ENCODE measurements at regions of chr12 and their contacts with region 1.

Region 1: DNA sequence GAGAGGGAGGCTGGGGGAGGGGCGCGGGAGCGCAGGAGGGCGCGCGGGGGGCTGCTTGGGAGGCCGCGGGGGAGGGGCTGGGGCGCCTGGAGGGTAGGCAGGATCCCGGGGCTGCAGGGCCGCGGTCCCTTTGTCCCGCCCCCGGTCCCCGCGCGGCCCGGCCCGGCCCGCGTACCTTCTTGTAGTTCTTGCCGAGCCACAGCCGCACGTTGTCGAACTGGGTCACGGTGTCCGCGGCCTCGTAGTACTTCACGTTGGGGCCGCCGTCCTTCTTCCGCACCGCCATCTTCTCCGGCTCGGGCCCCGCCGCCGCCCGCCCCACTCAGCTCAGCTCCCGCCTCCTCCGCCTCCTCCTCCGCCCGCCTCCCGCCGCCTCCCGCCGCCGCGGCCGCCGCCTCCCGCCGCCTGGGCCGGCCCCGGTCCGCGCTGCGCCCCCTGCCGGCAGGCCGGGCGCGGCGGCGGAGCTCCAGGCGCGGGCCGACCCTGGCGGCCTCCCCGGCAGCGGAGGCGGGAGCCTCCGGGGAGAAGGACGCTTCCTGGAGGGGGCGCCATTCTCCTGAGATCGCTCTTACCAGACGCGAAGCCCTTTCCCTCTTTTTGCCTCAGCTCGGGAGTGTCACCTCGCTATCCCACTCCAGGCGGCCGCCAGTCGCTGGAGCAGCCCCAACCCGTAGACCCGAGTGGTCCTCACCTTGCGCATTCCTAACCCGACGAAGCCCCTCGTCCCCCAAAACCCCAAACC is at the start of gene SMARCC2:
- DNase-seq: no peak
- H3K4me3 ChIP-seq: peak within 1 kb of the TSS; percentile 71
- H3K27me3 ChIP-seq: no peaks in the 10 kb centered on the region
- CTCF ChIP-seq: peak; percentile 67
- polyA plus RNA-seq, gene SMARCC2: 60.7 and 72.6 TPM in 2 replicates

Region 2: DNA sequence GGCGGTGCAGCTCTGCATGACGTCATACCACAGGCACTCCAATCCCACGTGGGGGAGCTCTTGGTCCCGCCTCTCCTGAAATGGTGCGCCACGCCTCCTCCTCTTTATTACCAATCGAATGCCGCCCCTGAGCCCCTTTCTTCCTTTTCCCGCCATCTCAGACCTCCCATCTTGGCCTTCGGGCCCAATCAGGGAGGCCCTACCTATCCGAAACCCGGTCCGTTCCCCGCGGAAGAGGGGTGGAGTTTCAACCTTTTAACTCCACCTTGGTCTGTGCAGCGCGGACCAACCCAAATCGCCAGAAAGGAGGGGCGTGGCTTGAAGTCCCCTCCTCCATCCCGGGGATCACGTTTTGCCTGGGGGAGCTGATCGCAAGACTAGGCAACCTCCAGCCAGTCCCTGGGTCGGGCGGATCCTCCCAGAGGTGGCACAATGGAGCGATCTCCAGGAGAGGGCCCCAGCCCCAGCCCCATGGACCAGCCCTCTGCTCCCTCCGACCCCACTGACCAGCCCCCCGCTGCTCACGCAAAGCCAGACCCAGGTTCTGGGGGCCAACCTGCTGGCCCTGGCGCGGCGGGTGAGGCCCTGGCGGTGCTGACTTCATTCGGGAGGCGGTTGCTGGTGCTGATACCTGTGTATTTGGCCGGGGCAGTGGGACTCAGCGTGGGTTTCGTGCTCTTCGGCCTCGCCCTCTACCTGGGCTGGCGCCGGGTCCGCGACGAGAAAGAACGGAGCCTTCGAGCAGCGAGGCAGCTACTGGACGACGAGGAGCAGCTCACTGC is 61.3 kb before region 1 on chr12 and contains the start of gene ESYT1:
- CTCF ChIA-PET with region 1: interaction called, 134 read pairs
- POLR2A ChIA-PET with region 1: no interaction called
- DNase-seq: peak; percentile 99
- H3K4me3 ChIP-seq: peak within 1 kb of the TSS; percentile 90
- H3K27me3 ChIP-seq: no peaks in the 10 kb centered on the region
- CTCF ChIP-seq: 0 out of 2 replicates have a peak, but pooled peaks have one; percentile 20
- polyA plus RNA-seq, gene ESYT1: 180 and 264 TPM in 2 replicates

Region 3: DNA sequence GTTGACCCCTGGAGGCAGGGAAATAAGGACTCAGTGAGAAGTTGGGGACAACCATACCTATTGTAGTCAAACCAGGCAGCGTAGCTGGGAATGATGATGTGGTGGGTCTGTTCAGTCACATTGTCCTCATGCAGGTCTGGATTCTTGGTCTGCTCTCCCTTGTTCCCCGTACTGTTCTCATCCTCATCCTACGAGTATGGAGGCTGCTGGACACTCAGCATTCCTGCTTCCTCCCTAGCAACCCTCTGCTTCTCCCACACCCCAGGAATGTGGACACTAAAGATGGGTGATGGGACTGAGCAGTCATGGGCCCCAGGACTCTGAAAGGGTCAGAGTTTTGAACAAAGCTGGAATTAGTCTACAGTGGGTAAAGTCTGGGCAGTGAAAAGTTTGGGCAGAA is 11.0 kb before region 1 on chr12:
- CTCF ChIA-PET with region 1: interaction called, 16 read pairs
- POLR2A ChIA-PET with region 1: no interaction called
- DNase-seq: no peak
- H3K4me3 ChIP-seq: no peak overlapping the region
- H3K27me3 ChIP-seq: no peaks in the 10 kb centered on the region
- CTCF ChIP-seq: no peak

Region 4: GRCh38 chr12:56224102-56224701 is 34.9 kb after region 1 on chr12 and contains the start of gene NABP2:
- CTCF ChIA-PET with region 1: interaction called, 132 read pairs
- POLR2A ChIA-PET with region 1: interaction called, 10 read pairs
- DNase-seq: peak; percentile 91
- H3K4me3 ChIP-seq: peak within 1 kb of the TSS; percentile 85
- H3K27me3 ChIP-seq: no peaks in the 10 kb centered on the region
- CTCF ChIP-seq: peak; percentile 82
- polyA plus RNA-seq, gene NABP2: 47.5 and 52.0 TPM in 2 replicates

Region 5: GRCh38 chr12:56266693-56267442 is 77.5 kb after region 1 on chr12 and contains the start of gene COQ10A:
- CTCF ChIA-PET with region 1: interaction called, 13 read pairs
- POLR2A ChIA-PET with region 1: no interaction called
- DNase-seq: peak; percentile 41
- H3K4me3 ChIP-seq: peak within 1 kb of the TSS; percentile 78
- H3K27me3 ChIP-seq: no peaks in the 10 kb centered on the region
- CTCF ChIP-seq: peak; percentile 82
- polyA plus RNA-seq, gene COQ10A: 13.7 and 14.1 TPM in 2 replicates

Measured in BJ (cell line).